Naive thymus-derived CD4-positive, alpha-beta T cell (primary cell): ENCODE measurements at regions of chr17 and their contacts with region 1.

Region 1: DNA sequence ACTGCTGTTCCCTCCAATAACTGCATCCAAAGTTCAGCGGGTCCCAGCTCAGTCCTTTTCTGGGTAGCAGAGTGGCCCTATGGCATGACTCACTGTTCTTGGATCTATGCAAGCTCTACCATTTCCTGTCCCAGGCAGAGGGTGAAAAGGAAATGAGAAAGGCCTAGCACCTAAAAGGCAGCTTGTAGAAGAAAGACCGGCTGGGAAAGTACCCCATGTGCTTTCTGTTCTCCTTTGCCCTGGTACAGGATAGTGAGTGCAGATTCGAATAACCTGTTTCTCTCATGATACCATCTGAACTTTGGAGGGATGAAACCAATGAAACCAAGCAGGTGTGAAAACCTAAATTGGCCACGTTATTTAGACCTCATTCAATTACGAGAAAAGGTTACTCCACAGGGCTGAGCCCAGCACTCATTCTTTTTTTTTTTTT is 12.7 kb upstream of the HASPIN start:
- DNase-seq: peak in 8 of 9 donors; percentile 70 to 87 (median 82)
- ATAC-seq: peak; percentile 99
- H3K4me3 ChIP-seq: peak overlapping the region; percentile 5
- H3K4me3 Mint-ChIP-seq: peak overlapping the region in 9 of 10 donors; percentile 21 to 80 (median 71)
- H3K27ac ChIP-seq: peak overlapping the region; percentile 40
- H3K27ac Mint-ChIP-seq: peak overlapping the region; percentile 63 to 95 (median 89)
- H3K4me1 ChIP-seq: peaks cover 21 to 24% of the 10 kb centered on the region in 2 donors
- H3K4me1 Mint-ChIP-seq: peaks cover 19 to 66% (median 38%) of the 10 kb centered on the region in 7 donors
- H3K27me3 ChIP-seq: no peaks in the 10 kb centered on the region
- H3K27me3 Mint-ChIP-seq: no peaks in the 10 kb centered on the region

Region 2: DNA sequence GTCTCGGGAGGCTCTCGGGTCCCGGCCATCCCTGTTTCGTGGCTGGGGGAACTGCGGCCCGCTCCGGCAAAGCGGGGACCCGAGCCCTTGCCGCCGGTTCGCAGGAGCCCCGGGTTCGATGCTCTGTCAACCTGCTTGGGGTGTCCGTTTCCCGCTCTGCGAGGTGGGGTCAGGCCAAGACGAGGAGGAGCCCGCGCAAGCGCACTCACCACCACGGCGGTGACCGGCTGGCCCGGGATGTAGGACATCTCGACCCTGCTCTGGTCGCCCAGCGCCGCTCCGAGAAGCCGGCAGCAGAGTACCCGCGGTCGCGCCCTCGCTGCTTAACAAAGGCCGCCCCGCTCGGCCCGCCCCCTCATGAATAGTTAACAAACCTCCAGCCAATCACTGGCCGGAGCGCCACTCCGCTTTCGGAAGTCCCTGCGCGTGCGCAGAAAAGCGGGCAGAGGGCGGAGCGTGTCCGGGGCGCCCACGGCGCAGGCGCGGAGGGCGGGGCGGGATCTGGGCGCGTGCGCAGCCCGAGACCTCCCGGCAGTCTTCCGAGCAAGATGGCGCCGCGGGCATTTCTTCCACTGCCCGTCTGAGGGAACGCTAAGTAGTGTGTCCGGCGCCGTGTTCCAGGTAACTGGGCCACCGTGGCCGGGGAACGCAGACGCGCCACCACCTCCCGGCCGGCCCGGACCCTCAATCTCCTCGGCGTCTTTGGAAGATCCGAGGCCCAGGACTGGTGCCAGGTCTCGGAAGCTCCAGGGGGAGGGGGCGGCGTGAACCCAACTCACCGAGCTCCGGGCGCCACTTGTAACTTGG is 42.5 kb before region 1 on chr17 and contains the starts of genes EMC6 and TAX1BP3:
- CTCF ChIA-PET with region 1: no interaction called
- POLR2A ChIA-PET with region 1: no interaction called
- intact Hi-C with region 1: loop called in 1 of 2 experiments (anchors 1 kb)
- DNase-seq: peak; percentile 97 to 100 (median 100)
- ATAC-seq: peak; percentile 96
- H3K4me3 ChIP-seq: peak within 1 kb of the TSS; percentile 91
- H3K4me3 Mint-ChIP-seq: peak within 1 kb of the TSS; percentile 82 to 94 (median 91)
- H3K27ac ChIP-seq: peak within 1 kb of the TSS; percentile 76
- H3K27ac Mint-ChIP-seq: peak within 1 kb of the TSS; percentile 63 to 93 (median 85)
- H3K4me1 ChIP-seq: peaks cover 8 to 17% of the 10 kb centered on the region in 2 donors
- H3K4me1 Mint-ChIP-seq: peaks cover 21 to 43% (median 30%) of the 10 kb centered on the region in 7 donors
- H3K27me3 ChIP-seq: no peaks in the 10 kb centered on the region
- H3K27me3 Mint-ChIP-seq: peaks cover 0 to 2% (median 0%) of the 10 kb centered on the region in 5 donors
- total RNA-seq, gene EMC6: 23.1 to 39.0 (median 31.2) TPM
- total RNA-seq, gene TAX1BP3: 10.5 to 28.4 (median 11.7) TPM

Region 3: DNA sequence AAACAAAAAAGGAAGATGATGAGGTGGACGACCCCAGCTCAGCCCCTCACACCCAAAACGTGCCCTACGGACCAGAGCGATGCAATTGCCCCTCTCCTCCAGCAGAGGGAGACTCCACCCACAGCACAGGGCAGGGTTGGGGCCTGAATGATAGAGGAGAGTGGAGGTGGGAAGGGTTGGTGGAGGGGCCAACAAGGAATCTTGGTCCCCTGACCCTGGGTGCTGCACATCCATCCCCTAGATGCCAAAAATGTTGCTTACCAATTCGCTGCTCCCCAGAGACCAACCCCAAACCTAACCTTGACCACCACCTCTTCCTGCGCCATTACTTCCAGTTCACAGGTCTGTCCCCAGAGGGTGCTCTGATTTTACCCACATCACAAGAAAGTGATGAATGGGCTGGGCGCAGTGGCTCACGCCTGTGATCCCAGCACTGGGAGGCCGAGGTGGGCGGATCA is 27.9 kb before region 1 on chr17:
- CTCF ChIA-PET with region 1: interaction called, 3 read pairs
- POLR2A ChIA-PET with region 1: interaction called, 6 read pairs
- intact Hi-C with region 1: loop called (anchors 2 kb)
- DNase-seq: peak in 7 of 9 donors; percentile 39 to 67 (median 52)
- ATAC-seq: peak; percentile 96
- H3K4me3 ChIP-seq: no peak overlapping the region
- H3K4me3 Mint-ChIP-seq: no peak overlapping the region
- H3K27ac ChIP-seq: no peak overlapping the region
- H3K27ac Mint-ChIP-seq: peak overlapping the region in 2 of 9 donors; percentile 9 to 65
- H3K4me1 ChIP-seq: peaks cover 4 to 7% of the 10 kb centered on the region in 2 donors
- H3K4me1 Mint-ChIP-seq: peaks cover 0 to 25% (median 6%) of the 10 kb centered on the region in 7 donors
- H3K27me3 ChIP-seq: no peaks in the 10 kb centered on the region
- H3K27me3 Mint-ChIP-seq: no peaks in the 10 kb centered on the region

Region 4: DNA sequence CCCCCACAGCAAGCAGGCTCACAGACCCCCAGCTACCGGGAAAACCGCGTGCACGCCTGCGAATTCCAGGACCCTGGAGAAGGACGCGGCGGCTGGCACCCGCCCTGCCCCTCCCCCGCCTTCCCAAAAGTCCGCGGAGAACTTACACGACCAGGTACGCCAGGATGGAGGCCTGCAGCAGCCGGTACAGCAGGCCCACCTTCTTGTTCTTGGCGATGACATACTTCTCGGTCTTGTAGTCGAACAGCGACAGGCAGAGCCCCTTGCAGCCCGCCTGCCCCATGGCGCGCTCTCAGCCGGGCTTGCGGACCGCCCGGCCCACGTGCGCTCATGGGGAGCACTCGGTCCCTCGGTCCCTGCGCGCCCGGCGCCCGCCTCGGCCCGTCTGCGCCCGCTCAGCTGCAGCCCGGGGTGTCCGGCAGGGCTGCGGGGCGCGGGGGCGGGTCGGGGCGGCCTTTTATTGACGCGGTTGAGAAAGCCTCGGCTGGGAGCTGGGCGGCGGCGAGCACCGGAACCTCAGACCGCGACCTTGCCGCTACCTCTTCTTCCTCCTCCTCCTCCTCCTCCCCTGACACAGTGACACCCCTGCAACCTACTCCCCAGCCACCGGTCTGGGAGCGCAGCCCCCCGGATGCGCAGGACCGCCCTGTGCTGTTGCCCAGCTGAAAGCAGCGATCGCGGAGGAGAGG is 15.1 kb before region 1 on chr17 and contains the start of gene P2RX5:
- CTCF ChIA-PET with region 1: interaction called, 3 read pairs
- POLR2A ChIA-PET with region 1: interaction called, 25 read pairs
- intact Hi-C with region 1: loop called (anchors 1 kb)
- DNase-seq: peak in 8 of 9 donors; percentile 24 to 59 (median 35)
- ATAC-seq: peak; percentile 71
- H3K4me3 ChIP-seq: peak within 1 kb of the TSS; percentile 82
- H3K4me3 Mint-ChIP-seq: peak within 1 kb of the TSS; percentile 87 to 98 (median 94)
- H3K27ac ChIP-seq: peak within 1 kb of the TSS; percentile 61
- H3K27ac Mint-ChIP-seq: peak within 1 kb of the TSS in 8 of 9 donors; percentile 67 to 95 (median 86)
- H3K4me1 ChIP-seq: peaks cover 3 to 9% of the 10 kb centered on the region in 2 donors
- H3K4me1 Mint-ChIP-seq: peaks cover 5 to 39% (median 16%) of the 10 kb centered on the region in 7 donors
- H3K27me3 ChIP-seq: no peaks in the 10 kb centered on the region
- H3K27me3 Mint-ChIP-seq: no peaks in the 10 kb centered on the region
- total RNA-seq, gene P2RX5: 10.7 to 94.5 (median 24.6) TPM

Region 5: DNA sequence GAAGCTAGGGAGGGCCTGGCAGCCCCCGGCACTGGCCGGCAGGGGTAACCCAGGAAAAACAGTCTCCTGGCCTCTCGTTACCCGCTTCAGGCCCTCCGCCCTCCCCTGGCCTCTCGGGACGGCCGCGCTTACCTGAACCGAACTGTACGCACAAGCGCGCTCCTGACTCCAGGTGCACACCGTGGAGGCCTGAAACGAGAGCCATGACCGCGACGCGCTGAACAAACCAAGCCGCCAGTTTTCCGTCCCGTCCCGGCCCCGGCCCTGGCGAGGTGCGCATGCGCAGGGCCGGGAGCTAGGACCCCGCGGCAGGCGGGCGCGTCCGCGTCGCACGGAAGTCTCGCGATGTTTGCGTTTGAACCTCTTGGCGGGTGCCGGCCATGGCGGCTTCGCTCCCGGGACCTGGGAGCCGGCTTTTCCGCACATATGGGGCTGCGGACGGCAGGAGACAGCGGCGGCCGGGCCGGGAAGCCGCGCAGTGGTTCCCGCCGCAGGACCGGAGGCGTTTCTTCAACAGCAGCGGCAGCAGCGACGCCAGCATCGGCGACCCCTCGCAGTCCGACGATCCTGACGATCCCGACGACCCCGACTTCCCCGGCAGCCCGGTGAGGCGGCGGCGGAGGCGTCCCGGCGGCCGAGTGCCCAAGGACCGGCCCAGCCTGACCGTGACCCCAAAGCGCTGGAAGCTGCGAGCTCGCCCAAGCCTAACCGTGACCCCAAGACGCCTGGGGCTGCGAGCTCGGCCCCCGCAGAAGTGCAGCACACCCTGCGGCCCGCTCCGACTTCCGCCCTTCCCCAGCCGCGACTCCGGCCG is 12.8 kb after region 1 on chr17 and contains the start of gene HASPIN:
- CTCF ChIA-PET with region 1: no interaction called
- POLR2A ChIA-PET with region 1: interaction called, 21 read pairs
- intact Hi-C with region 1: loop called (anchors 1 kb)
- DNase-seq: peak; percentile 85 to 97 (median 92)
- ATAC-seq: peak; percentile 92
- H3K4me3 ChIP-seq: peak within 1 kb of the TSS; percentile 77
- H3K4me3 Mint-ChIP-seq: peak within 1 kb of the TSS; percentile 84 to 95 (median 92)
- H3K27ac ChIP-seq: peak within 1 kb of the TSS; percentile 83
- H3K27ac Mint-ChIP-seq: peak within 1 kb of the TSS; percentile 65 to 94 (median 86)
- H3K4me1 ChIP-seq: peaks cover 7 to 24% of the 10 kb centered on the region in 2 donors
- H3K4me1 Mint-ChIP-seq: peaks cover 21 to 55% (median 39%) of the 10 kb centered on the region in 7 donors
- H3K27me3 ChIP-seq: no peaks in the 10 kb centered on the region
- H3K27me3 Mint-ChIP-seq: no peaks in the 10 kb centered on the region
- total RNA-seq, gene HASPIN: 0.32 to 18.5 (median 0.35) TPM

Region 6: DNA sequence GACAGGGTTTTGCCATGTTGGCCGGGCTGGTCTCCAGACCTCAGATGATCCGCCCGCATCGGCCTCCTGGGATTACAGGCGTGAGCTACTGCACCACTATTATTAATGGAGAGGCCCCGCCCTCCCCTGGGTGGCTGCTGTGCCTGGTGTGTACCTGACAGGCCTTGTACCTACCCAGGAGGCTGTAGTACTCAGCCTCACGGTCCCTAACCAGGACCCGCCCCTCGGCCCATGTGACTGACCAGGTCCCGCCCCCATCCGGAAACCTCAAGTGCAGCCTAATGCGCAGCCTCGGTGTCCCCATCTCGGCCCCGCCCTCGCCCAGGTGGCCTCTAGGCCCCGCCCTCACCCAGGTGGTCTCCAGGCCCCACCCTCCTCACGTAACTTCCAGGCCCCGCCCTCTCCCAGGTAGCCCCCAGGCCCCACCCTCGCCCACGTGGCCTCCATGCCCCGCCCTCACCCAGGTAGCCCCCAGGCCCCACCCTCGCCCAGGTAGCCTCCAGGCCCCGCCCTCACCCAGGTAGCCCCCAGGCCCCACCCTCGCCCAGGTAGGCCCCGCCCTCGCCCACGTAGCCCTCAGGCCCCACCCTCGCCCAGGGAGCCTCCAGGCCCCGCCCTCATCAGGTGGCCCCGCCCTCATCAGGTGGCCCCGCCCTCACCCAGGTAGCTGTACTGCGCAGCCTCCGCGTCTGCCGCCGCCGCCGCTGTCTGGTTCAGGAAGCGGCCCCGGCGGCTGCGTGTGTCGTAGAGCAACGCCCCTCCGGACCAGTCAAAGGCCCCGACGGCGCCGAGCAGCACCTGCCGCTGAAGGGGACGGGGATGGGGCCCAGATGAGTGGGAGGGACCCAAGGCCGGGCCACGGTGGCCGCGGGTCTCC is 43.7 kb after region 1 on chr17:
- CTCF ChIA-PET with region 1: no interaction called
- POLR2A ChIA-PET with region 1: no interaction called
- intact Hi-C with region 1: loop called in 1 of 2 experiments (anchors 1 kb)
- DNase-seq: peak; percentile 46 to 87 (median 77)
- ATAC-seq: peak; percentile 98
- H3K4me3 ChIP-seq: peak overlapping the region; percentile 59
- H3K4me3 Mint-ChIP-seq: peak overlapping the region in 7 of 10 donors; percentile 17 to 77 (median 57)
- H3K27ac ChIP-seq: peak overlapping the region; percentile 80
- H3K27ac Mint-ChIP-seq: peak overlapping the region in 8 of 9 donors; percentile 36 to 87 (median 80)
- H3K4me1 ChIP-seq: peaks cover 20 to 29% of the 10 kb centered on the region in 2 donors
- H3K4me1 Mint-ChIP-seq: peaks cover 16 to 39% (median 27%) of the 10 kb centered on the region in 7 donors
- H3K27me3 ChIP-seq: no peaks in the 10 kb centered on the region
- H3K27me3 Mint-ChIP-seq: no peaks in the 10 kb centered on the region

Region 7: DNA sequence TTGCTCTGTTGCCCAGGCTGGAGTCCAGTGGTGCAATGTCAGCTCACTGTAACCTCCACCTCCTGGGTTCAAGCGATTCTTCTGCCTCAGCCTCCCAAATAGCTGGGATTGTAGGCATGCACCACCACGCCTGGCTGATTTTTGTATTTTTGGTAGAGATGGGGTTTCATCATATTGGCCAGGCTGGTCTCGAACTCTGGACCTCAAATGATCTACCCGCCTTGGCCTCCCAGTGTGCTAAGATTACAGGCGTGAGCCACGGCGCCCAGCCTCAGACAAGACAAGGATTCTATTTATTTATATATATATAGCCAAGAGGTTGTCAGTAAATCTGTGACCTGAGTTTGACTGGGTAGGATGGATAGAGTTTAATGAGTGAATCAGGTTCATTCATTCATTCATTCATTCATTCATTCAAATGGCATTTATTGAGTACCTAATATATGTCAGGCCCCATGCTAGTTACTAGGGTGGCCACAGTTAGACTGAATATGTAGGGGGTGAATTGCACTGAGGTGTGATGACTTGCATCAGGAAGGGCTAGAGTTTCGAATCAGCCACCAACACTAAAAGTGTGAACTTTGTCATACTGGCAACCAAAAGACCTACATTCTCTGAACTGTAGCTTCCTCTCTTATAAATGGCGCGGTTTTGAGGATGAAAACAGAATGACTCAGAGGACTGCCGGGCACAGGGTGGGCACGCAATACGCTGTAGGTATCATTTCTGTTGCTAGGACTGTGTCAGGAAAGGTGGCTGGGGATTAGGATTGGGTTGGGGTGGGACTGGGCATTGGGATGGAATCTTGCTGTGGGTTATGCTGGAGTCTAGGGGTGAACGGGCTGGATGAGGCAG is 52.2 kb after region 1 on chr17:
- CTCF ChIA-PET with region 1: no interaction called
- POLR2A ChIA-PET with region 1: no interaction called
- intact Hi-C with region 1: loop called in 1 of 2 experiments (anchors 2 kb)
- DNase-seq: no peak
- ATAC-seq: peak; percentile 64
- H3K4me3 ChIP-seq: peak overlapping the region; percentile 24
- H3K4me3 Mint-ChIP-seq: peak overlapping the region in 3 of 10 donors; percentile 22 to 82 (median 53)
- H3K27ac ChIP-seq: no peak overlapping the region
- H3K27ac Mint-ChIP-seq: peak overlapping the region in 5 of 9 donors; percentile 48 to 95 (median 67)
- H3K4me1 ChIP-seq: peaks cover 14 to 45% of the 10 kb centered on the region in 2 donors
- H3K4me1 Mint-ChIP-seq: peaks cover 17 to 51% (median 32%) of the 10 kb centered on the region in 7 donors
- H3K27me3 ChIP-seq: no peaks in the 10 kb centered on the region
- H3K27me3 Mint-ChIP-seq: no peaks in the 10 kb centered on the region